ENCODE measurements at regions of chr22 and their contacts with region 1.

Region 1: DNA sequence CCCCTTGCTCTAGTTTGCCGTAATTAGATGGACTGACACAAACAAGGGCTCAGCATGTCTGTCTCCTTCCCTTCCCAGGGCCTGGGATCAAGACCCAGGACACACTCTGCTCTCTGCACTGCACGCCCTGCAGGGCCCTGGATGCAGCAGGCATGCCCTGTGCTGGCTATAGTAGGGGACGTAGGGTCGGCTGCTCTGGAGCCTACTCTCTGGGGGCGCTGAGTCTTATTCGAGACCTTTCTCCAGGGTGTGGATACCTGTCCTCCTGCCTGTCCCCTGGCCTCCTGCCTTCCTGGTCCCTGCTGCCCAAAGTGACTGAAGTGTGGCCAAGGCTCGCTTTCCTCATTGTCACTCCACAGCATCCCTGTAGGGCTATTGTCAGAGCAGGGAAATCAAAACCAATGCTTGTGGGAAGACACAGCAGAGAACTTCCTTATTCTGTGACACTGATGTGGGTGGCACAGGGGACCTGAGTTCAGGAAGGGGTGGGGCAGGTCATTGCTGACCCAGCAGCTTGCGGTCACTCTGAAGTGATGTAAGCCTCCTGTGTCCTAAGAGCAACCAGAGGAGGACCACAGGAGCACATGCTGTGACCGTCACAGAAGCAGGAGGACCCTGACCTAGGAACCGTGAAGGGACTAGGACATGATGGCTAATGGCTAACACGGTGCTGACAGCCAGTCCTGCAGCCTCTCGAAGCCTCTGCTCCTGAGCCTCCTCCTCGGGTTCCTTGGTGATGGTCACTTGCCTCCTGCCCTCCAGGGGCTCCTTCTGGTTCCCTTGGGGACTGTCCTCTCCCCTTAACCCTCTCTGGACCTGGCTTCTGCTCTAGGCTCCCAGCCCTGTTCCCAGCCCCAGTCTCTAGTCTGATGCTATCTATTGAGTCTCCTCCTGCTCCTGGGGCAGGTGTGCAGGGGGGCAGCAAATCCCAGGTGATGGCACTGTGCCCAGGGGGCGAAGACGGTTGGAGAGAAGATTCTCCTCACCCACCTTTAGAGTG is 10.3 kb downstream of the APOBEC3A start:
- DNase-seq: peak; percentile 98 to 100 (median 99)
- H3K4me3 ChIP-seq: peak overlapping the region in 1 of 3 experiments; percentile 33
- H3K4me3 Mint-ChIP-seq: peak overlapping the region in 1 of 2 donors; percentile 64
- H3K27ac ChIP-seq: peak overlapping the region; percentile 80 to 88
- H3K27ac Mint-ChIP-seq: peak overlapping the region; percentile 91 to 99 (median 97)
- H3K4me1 ChIP-seq: peaks cover 86 to 95% of the 10 kb centered on the region in 2 donors
- H3K4me1 Mint-ChIP-seq: peaks cover 94% of the 10 kb centered on the region
- H3K27me3 ChIP-seq: no peaks in the 10 kb centered on the region
- H3K27me3 Mint-ChIP-seq: peaks cover 3 to 8% (median 4%) of the 10 kb centered on the region in 3 donors
- CTCF ChIP-seq: no peak

Region 2: GRCh38 chr22:38953577-38954413 is 14.0 kb before region 1 on chr22:
- intact Hi-C with region 1: loop called in 1 of 2 experiments (anchors 2 kb)
- DNase-seq: peak; percentile 98 to 99 (median 99)
- H3K4me3 ChIP-seq: peak overlapping the region; percentile 3 to 71 (median 30)
- H3K4me3 Mint-ChIP-seq: peak overlapping the region; percentile 82 to 95
- H3K27ac ChIP-seq: peak overlapping the region; percentile 95 to 100
- H3K27ac Mint-ChIP-seq: peak overlapping the region; percentile 99 to 100 (median 100)
- H3K4me1 ChIP-seq: peaks cover 84 to 94% of the 10 kb centered on the region in 2 donors
- H3K4me1 Mint-ChIP-seq: peaks cover 87% of the 10 kb centered on the region
- H3K27me3 ChIP-seq: no peaks in the 10 kb centered on the region
- H3K27me3 Mint-ChIP-seq: peaks cover 0 to 13% (median 1%) of the 10 kb centered on the region in 3 donors
- CTCF ChIP-seq: no peak

Region 3: GRCh38 chr22:38981992-38982927 is 14.5 kb after region 1 on chr22 and contains the start of gene APOBEC3B:
- intact Hi-C with region 1: no loop called
- DNase-seq: peak; percentile 95 to 99 (median 98)
- H3K4me3 ChIP-seq: peak within 1 kb of the TSS; percentile 39 to 78 (median 42)
- H3K4me3 Mint-ChIP-seq: peak within 1 kb of the TSS; percentile 81 to 90
- H3K27ac ChIP-seq: peak within 1 kb of the TSS; percentile 24 to 77
- H3K27ac Mint-ChIP-seq: peak within 1 kb of the TSS; percentile 76 to 97 (median 90)
- H3K4me1 ChIP-seq: peaks cover 21 to 40% of the 10 kb centered on the region in 2 donors
- H3K4me1 Mint-ChIP-seq: peaks cover 37% of the 10 kb centered on the region
- H3K27me3 ChIP-seq: no peaks in the 10 kb centered on the region
- H3K27me3 Mint-ChIP-seq: peaks cover 0 to 7% (median 6%) of the 10 kb centered on the region in 3 donors
- CTCF ChIP-seq: no peak
- polyA plus RNA-seq, gene APOBEC3B: 0.40 to 48.2 (median 12.6) TPM